Activated CD4-positive, alpha-beta T cell treated with anti-CD3 and anti-CD28 coated beads for 36 hours (primary cell): ENCODE measurements at regions of chr3 and their contacts with region 1.

Region 1: GRCh38 chr3:188683032-188683521 is 488.7 kb upstream of the TPRG1 start:
- DNase-seq: peak; percentile 69
- ATAC-seq: peak; percentile 97
- H3K4me3 Mint-ChIP-seq: no peak overlapping the region
- H3K27ac Mint-ChIP-seq: no peak overlapping the region
- H3K4me1 Mint-ChIP-seq: peaks cover 41% of the 10 kb centered on the region
- H3K27me3 Mint-ChIP-seq: no peaks in the 10 kb centered on the region

Region 2: GRCh38 chr3:188584162-188584529 is 98.9 kb before region 1 on chr3:
- CTCF ChIA-PET with region 1: no interaction called
- POLR2A ChIA-PET with region 1: no interaction called
- intact Hi-C with region 1: loop called (anchors 1 kb)
- DNase-seq: peak; percentile 43
- ATAC-seq: peak; percentile 60
- H3K4me3 Mint-ChIP-seq: no peak overlapping the region
- H3K27ac Mint-ChIP-seq: no peak overlapping the region
- H3K4me1 Mint-ChIP-seq: peaks cover 12% of the 10 kb centered on the region
- H3K27me3 Mint-ChIP-seq: no peaks in the 10 kb centered on the region